ENCODE measurements at regions of chr22 and their contacts with region 1.

Region 1: DNA sequence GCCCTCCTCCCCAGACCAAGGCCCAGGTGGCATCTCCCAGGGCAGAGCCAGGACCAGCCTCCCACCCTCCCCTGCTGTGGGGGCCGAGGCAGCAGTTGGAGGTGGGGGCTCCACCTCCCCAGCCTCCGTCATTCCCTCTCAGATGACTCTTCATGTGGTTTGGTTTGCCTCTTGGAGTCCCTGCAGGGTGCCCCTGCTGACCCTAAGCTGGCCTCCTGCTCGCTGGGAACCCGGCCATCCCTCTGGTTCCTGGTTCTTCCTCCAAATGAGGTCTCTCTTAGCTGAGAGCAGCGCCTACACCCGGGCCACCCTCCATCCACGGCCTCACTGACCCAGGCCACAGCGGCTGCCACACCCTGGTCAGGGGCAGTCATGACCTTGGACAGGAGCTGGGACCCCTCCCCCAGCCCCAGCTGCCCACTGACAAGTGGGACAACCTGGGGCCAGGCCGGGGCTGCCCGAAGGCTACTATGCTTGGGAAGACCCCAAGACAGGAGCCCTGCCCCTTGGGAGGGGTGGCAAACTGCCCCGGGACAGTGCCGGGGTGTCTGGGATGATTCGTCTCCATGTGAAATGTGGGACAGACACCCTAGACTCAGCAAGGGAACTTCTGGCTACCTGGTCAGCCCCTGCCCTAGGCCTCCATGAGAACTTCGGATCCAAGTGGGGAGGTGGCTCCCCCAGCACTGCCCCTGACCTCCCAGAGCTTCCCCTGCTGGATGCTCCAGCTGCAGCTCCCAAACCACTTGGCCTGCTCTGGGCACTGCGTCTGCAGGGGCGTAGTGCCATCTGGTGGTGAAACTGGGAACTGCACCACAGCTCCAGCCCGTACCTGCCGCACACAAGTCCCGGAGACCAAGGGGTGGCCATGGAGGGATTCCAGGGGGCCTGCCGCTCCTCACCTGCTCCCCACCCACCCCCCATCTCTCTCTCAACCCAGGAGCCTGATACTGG is 194.5 kb downstream of the IGLL1 start:
- DNase-seq: peak; percentile 84
- H3K4me3 ChIP-seq: no peak overlapping the region
- H3K27ac ChIP-seq: no peak overlapping the region
- H3K4me1 ChIP-seq: no peaks in the 10 kb centered on the region
- H3K27me3 ChIP-seq: no peaks in the 10 kb centered on the region
- CTCF ChIP-seq: peak; percentile 90 to 98
- POLR2A ChIP-seq: no peak

Region 2: GRCh38 chr22:23144932-23145873 is 240.4 kb before region 1 on chr22 and contains the start of gene RAB36:
- CTCF ChIA-PET with region 1: interaction called, 5 read pairs
- POLR2A ChIA-PET with region 1: no interaction called
- dilution Hi-C with region 1: no loop called
- intact Hi-C with region 1: loop called (anchors 10 kb)
- DNase-seq: peak; percentile 95
- H3K4me3 ChIP-seq: peak within 1 kb of the TSS; percentile 25 to 35 (median 26)
- H3K27ac ChIP-seq: peak within 1 kb of the TSS; percentile 26
- H3K4me1 ChIP-seq: peaks cover 9% of the 10 kb centered on the region
- H3K27me3 ChIP-seq: no peaks in the 10 kb centered on the region
- CTCF ChIP-seq: no peak
- POLR2A ChIP-seq: no peak
- total RNA-seq, gene RAB36: 2.6 and 2.7 TPM in 2 replicates

Region 3: GRCh38 chr22:23178512-23179254 is 206.9 kb before region 1 on chr22:
- CTCF ChIA-PET with region 1: interaction called, 100 read pairs
- POLR2A ChIA-PET with region 1: no interaction called
- dilution Hi-C with region 1: no loop called
- intact Hi-C with region 1: loop called (anchors 1 kb)
- DNase-seq: peak; percentile 70
- H3K4me3 ChIP-seq: no peak overlapping the region
- H3K27ac ChIP-seq: peak overlapping the region; percentile 19
- H3K4me1 ChIP-seq: peaks cover 19% of the 10 kb centered on the region
- H3K27me3 ChIP-seq: no peaks in the 10 kb centered on the region
- CTCF ChIP-seq: peak; percentile 94 to 96
- POLR2A ChIP-seq: no peak

Region 4: GRCh38 chr22:23315341-23315917 is 70.1 kb before region 1 on chr22:
- CTCF ChIA-PET with region 1: interaction called, 8 read pairs
- POLR2A ChIA-PET with region 1: no interaction called
- dilution Hi-C with region 1: no loop called
- intact Hi-C with region 1: loop called (anchors 1 kb)
- DNase-seq: peak; percentile 49
- H3K4me3 ChIP-seq: no peak overlapping the region
- H3K27ac ChIP-seq: no peak overlapping the region
- H3K4me1 ChIP-seq: peaks cover 1% of the 10 kb centered on the region
- H3K27me3 ChIP-seq: no peaks in the 10 kb centered on the region
- CTCF ChIP-seq: peak; percentile 55 to 67
- POLR2A ChIP-seq: no peak

Region 5: GRCh38 chr22:23591201-23591791 is 205.7 kb after region 1 on chr22:
- CTCF ChIA-PET with region 1: interaction called, 11 read pairs
- POLR2A ChIA-PET with region 1: no interaction called
- dilution Hi-C with region 1: no loop called
- intact Hi-C with region 1: no loop called
- DNase-seq: peak; percentile 59
- H3K4me3 ChIP-seq: no peak overlapping the region
- H3K27ac ChIP-seq: no peak overlapping the region
- H3K4me1 ChIP-seq: no peaks in the 10 kb centered on the region
- H3K27me3 ChIP-seq: no peaks in the 10 kb centered on the region
- CTCF ChIP-seq: peak; percentile 88 to 92
- POLR2A ChIP-seq: no peak

Measured in endothelial cell of umbilical vein (primary cell).